CD8-positive, alpha-beta T cell (primary cell): ENCODE measurements at regions of chr2 and their contacts with region 1.

Region 1: DNA sequence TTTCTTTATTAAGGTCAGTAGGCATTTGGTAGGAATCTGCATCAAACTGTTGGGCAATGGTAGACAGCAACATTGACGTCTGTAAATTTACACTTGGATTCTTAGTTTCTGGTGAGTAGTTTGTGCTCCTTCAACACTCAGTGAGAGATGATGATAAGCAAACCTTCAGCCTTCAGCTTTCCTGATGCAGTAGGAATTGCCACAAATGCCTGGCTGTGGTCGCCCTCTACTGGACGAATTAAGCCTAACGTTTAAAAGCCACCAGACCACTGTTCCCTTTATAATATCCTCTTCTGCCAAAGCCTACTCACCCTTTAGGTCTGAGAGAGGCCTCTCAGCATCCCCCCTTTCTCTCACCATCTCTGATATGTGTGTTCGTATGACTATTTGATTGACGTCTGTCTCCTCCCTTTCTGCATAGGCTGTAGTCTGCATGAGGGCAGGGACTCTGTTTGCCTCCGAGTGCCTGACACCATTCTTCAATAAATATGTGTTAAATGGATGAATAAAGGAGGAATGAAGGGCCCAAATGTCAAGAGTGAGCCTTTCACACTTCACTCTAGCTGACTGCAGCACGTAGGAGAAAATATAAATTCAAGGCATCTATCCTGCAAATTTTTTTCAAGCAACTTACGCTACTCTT is 47.0 kb upstream of the PLEKHM3 start:
- DNase-seq: peak; percentile 6 to 67 (median 58)
- ATAC-seq: peak; percentile 54
- H3K4me3 ChIP-seq: no peak overlapping the region
- H3K4me3 Mint-ChIP-seq: no peak overlapping the region
- H3K27ac ChIP-seq: no peak overlapping the region
- H3K27ac Mint-ChIP-seq: no peak overlapping the region
- H3K4me1 ChIP-seq: no peaks in the 10 kb centered on the region
- H3K4me1 Mint-ChIP-seq: no peaks in the 10 kb centered on the region
- H3K27me3 ChIP-seq: no peaks in the 10 kb centered on the region
- H3K27me3 Mint-ChIP-seq: peaks cover 6% of the 10 kb centered on the region
- CTCF ChIP-seq: peak; percentile 83

Region 2: GRCh38 chr2:206981739-206982340 is 1090.5 kb before region 1 on chr2:
- CTCF ChIA-PET with region 1: no interaction called
- POLR2A ChIA-PET with region 1: no interaction called
- intact Hi-C with region 1: loop called in 1 of 2 experiments (anchors 5 kb)
- DNase-seq: peak; percentile 14 to 58 (median 42)
- ATAC-seq: peak; percentile 52
- H3K4me3 ChIP-seq: no peak overlapping the region
- H3K4me3 Mint-ChIP-seq: no peak overlapping the region
- H3K27ac ChIP-seq: no peak overlapping the region
- H3K27ac Mint-ChIP-seq: no peak overlapping the region
- H3K4me1 ChIP-seq: no peaks in the 10 kb centered on the region
- H3K4me1 Mint-ChIP-seq: no peaks in the 10 kb centered on the region
- H3K27me3 ChIP-seq: no peaks in the 10 kb centered on the region
- H3K27me3 Mint-ChIP-seq: no peaks in the 10 kb centered on the region
- CTCF ChIP-seq: no peak

Region 3: GRCh38 chr2:207692206-207693065 is 379.9 kb before region 1 on chr2:
- CTCF ChIA-PET with region 1: interaction called, 3 read pairs
- POLR2A ChIA-PET with region 1: no interaction called
- intact Hi-C with region 1: loop called in 1 of 2 experiments (anchors 1 kb)
- DNase-seq: peak in 8 of 9 experiments; percentile 27 to 71 (median 54)
- ATAC-seq: peak; percentile 52
- H3K4me3 ChIP-seq: no peak overlapping the region
- H3K4me3 Mint-ChIP-seq: no peak overlapping the region
- H3K27ac ChIP-seq: no peak overlapping the region
- H3K27ac Mint-ChIP-seq: no peak overlapping the region
- H3K4me1 ChIP-seq: no peaks in the 10 kb centered on the region
- H3K4me1 Mint-ChIP-seq: peaks cover 3% of the 10 kb centered on the region
- H3K27me3 ChIP-seq: no peaks in the 10 kb centered on the region
- H3K27me3 Mint-ChIP-seq: peaks cover 3% of the 10 kb centered on the region
- CTCF ChIP-seq: peak; percentile 54

Region 4: GRCh38 chr2:207746131-207746530 is 326.2 kb before region 1 on chr2:
- CTCF ChIA-PET with region 1: interaction called, 20 read pairs
- POLR2A ChIA-PET with region 1: no interaction called
- intact Hi-C with region 1: loop called in 1 of 2 experiments (anchors 1 kb)
- DNase-seq: peak in 6 of 9 experiments; percentile 9 to 67 (median 42)
- ATAC-seq: peak; percentile 67
- H3K4me3 ChIP-seq: no peak overlapping the region
- H3K4me3 Mint-ChIP-seq: no peak overlapping the region
- H3K27ac ChIP-seq: no peak overlapping the region
- H3K27ac Mint-ChIP-seq: no peak overlapping the region
- H3K4me1 ChIP-seq: no peaks in the 10 kb centered on the region
- H3K4me1 Mint-ChIP-seq: no peaks in the 10 kb centered on the region
- H3K27me3 ChIP-seq: no peaks in the 10 kb centered on the region
- H3K27me3 Mint-ChIP-seq: no peaks in the 10 kb centered on the region
- CTCF ChIP-seq: peak; percentile 70